Activated CD8-positive, alpha-beta memory T cell treated with anti-CD3 and anti-CD28 coated beads, Interleukin-2, amount 10 ng/mL, durations not matched to agents 7 days and 5 days (primary cell): ENCODE measurements at regions of chr5 and their contacts with region 1.

Region 1: GRCh38 chr5:923281-923873 is 30.7 kb downstream of the TRIP13 start:
- DNase-seq: peak; percentile 80
- ATAC-seq: peak; percentile 94
- H3K4me3 Mint-ChIP-seq: no peak overlapping the region
- H3K27ac Mint-ChIP-seq: no peak overlapping the region
- H3K4me1 Mint-ChIP-seq: peaks cover 12% of the 10 kb centered on the region
- H3K27me3 Mint-ChIP-seq: peaks cover 28% of the 10 kb centered on the region

Region 2: GRCh38 chr5:956941-957747 is 33.8 kb after region 1 on chr5:
- CTCF ChIA-PET with region 1: no interaction called
- DNase-seq: peak; percentile 88
- ATAC-seq: peak; percentile 76
- H3K4me3 Mint-ChIP-seq: no peak overlapping the region
- H3K27ac Mint-ChIP-seq: peak overlapping the region; percentile 37
- H3K4me1 Mint-ChIP-seq: peaks cover 46% of the 10 kb centered on the region
- H3K27me3 Mint-ChIP-seq: peaks cover 26% of the 10 kb centered on the region

Region 3: DNA sequence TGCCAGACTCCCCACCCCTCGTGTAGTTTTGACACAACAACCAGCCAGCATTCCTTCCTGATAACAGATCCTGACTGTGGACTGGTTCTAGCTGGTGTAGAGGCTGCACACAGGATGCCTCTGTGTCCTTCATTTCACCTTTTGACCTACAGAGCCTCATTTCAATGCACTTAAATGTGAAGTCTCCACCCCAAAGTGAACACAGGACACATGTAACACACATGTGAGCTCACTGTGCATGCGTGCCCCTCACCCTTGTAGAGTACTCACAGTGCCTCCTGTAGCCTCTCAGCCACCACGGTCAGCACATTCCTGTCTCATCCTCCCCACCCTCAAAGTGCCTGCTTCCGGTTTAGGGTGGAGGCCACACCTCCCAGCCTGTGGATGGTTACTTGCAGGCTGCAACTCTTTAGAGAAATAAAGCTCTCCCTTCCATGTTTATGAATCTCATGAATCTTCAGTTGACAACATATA is 73.7 kb after region 1 on chr5:
- CTCF ChIA-PET with region 1: interaction called, 10 read pairs
- DNase-seq: peak; percentile 71
- ATAC-seq: peak; percentile 83
- H3K4me3 Mint-ChIP-seq: peak overlapping the region; percentile 72
- H3K27ac Mint-ChIP-seq: peak overlapping the region; percentile 28
- H3K4me1 Mint-ChIP-seq: peaks cover 17% of the 10 kb centered on the region
- H3K27me3 Mint-ChIP-seq: peaks cover 17% of the 10 kb centered on the region

Region 4: GRCh38 chr5:1004461-1005248 is 81.3 kb after region 1 on chr5:
- CTCF ChIA-PET with region 1: interaction called, 27 read pairs
- DNase-seq: peak; percentile 50
- ATAC-seq: peak; percentile 50
- H3K4me3 Mint-ChIP-seq: no peak overlapping the region
- H3K27ac Mint-ChIP-seq: no peak overlapping the region
- H3K4me1 Mint-ChIP-seq: peaks cover 18% of the 10 kb centered on the region
- H3K27me3 Mint-ChIP-seq: peaks cover 64% of the 10 kb centered on the region

Region 5: GRCh38 chr5:1140171-1140817 is 216.9 kb after region 1 on chr5:
- CTCF ChIA-PET with region 1: interaction called, 41 read pairs
- DNase-seq: peak; percentile 77
- ATAC-seq: peak; percentile 79
- H3K4me3 Mint-ChIP-seq: no peak overlapping the region
- H3K27ac Mint-ChIP-seq: peak overlapping the region; percentile 49
- H3K4me1 Mint-ChIP-seq: no peaks in the 10 kb centered on the region
- H3K27me3 Mint-ChIP-seq: no peaks in the 10 kb centered on the region

Region 6: GRCh38 chr5:1174122-1174936 is 251.0 kb after region 1 on chr5:
- CTCF ChIA-PET with region 1: interaction called, 16 read pairs
- DNase-seq: peak; percentile 49
- ATAC-seq: peak; percentile 28
- H3K4me3 Mint-ChIP-seq: no peak overlapping the region
- H3K27ac Mint-ChIP-seq: no peak overlapping the region
- H3K4me1 Mint-ChIP-seq: peaks cover 12% of the 10 kb centered on the region
- H3K27me3 Mint-ChIP-seq: no peaks in the 10 kb centered on the region